Left lung (tissue), 14 donors: ENCODE measurements at regions of chr3 and their contacts with region 1.

Region 1: GRCh38 chr3:144770915-144771351 is 799.3 kb downstream of the DIPK2A start:
- DNase-seq: peak in 1 of 4 donors; percentile 50
- ATAC-seq: peak; percentile 88
- H3K4me3 ChIP-seq: no peak overlapping the region
- H3K27ac ChIP-seq: no peak overlapping the region
- H3K4me1 ChIP-seq: no peaks in the 10 kb centered on the region
- H3K27me3 ChIP-seq: no peaks in the 10 kb centered on the region
- CTCF ChIP-seq: peak in 1 of 2 donors; percentile 33

Region 2: DNA sequence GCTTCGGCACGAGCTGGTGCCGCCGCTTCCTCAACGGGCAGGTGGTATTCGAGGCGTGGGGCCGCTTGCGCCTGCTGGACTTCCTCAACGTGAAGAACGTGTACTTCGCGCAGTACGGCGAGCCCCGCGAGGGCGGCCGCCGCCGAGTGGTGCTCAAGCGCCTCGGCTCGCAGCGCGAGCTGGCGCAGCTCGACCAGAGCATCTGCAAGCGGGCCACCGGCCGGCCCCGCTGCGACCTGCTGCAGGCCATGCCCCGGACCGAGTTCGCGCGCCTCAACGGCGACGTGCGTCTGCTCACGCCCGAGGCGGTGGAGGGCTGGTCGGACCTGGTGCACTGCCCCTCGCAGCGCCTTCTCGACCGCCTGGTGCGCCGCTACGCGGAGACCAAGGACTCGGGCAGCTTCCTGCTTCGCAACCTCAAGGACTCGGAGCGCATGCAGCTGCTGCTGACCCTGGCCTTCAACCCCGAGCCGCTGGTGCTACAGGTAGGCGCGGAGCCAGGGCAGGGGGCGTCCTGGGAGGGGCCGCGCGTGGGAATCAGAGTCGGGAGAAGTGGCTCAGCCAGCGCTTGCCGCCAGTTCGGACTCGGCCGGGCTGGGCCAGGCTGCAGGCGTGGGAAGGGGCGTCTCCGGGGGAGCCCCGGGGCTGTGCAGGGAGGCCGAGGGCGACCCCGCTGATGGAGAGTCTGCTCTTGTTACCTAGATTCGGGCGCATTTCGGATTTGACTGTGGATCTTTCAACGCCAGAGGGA is 798.3 kb before region 1 on chr3:
- intact Hi-C with region 1: loop called in 1 of 2 experiments (anchors 10 kb)
- DNase-seq: peak; percentile 79 to 97 (median 86)
- ATAC-seq: peak; percentile 52
- H3K4me3 ChIP-seq: peak overlapping the region; percentile 89 to 90
- H3K27ac ChIP-seq: peak overlapping the region; percentile 99
- H3K4me1 ChIP-seq: peaks cover 12 to 50% of the 10 kb centered on the region in 2 donors
- H3K27me3 ChIP-seq: no peaks in the 10 kb centered on the region
- CTCF ChIP-seq: peak in 1 of 2 donors; percentile 40